ENCODE measurements at regions of chr2 and their contacts with region 1.

Region 1: GRCh38 chr2:18265614-18266587 is 294.6 kb downstream of the RDH14 start:
- DNase-seq: no peak
- H3K4me3 ChIP-seq: no peak overlapping the region
- H3K27ac ChIP-seq: no peak overlapping the region
- H3K4me1 ChIP-seq: no peaks in the 10 kb centered on the region
- H3K27me3 ChIP-seq: no peaks in the 10 kb centered on the region
- CTCF ChIP-seq: peak; percentile 32 to 49 (median 48); a peak in 3 of 4 replicates
- EP300 ChIP-seq: no peak
- POLR2A ChIP-seq: no peak
- RAD21 ChIP-seq: peak in 1 of 2 experiments; percentile 37; a peak in 2 of 4 replicates

Region 2: DNA sequence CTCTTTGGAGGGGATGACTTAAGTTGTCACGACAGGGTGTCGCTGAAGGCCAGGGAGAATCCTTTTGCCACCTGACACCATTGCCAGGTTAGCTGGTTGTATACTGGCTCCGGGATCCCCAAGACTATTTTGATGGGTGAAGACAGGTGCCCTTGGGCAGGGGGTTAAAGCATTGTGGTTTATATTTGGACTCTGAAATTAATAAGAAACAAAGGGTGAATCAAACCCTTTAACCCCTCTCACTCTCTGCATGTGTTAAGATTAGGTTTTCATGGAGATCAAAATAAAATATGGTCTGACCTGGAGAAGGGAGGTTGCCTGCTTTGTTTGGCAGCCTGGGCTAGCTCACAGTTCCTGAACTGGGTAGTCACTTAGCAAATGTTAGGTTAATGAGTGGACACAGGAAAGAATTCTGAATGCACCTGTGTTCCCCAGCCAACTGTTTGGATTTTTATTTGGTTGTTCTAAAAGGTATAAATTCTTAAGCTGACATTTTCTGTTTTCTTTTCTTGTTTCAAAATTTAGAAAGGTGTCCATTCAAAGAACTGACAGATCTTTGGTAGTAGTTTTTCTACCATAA is 85.8 kb before region 1 on chr2:
- CTCF ChIA-PET with region 1: interaction called, 15 read pairs
- POLR2A ChIA-PET with region 1: no interaction called
- DNase-seq: no peak
- H3K4me3 ChIP-seq: no peak overlapping the region
- H3K27ac ChIP-seq: no peak overlapping the region
- H3K4me1 ChIP-seq: no peaks in the 10 kb centered on the region
- H3K27me3 ChIP-seq: no peaks in the 10 kb centered on the region
- CTCF ChIP-seq: no peak
- EP300 ChIP-seq: no peak
- POLR2A ChIP-seq: no peak
- RAD21 ChIP-seq: no peak

Region 3: DNA sequence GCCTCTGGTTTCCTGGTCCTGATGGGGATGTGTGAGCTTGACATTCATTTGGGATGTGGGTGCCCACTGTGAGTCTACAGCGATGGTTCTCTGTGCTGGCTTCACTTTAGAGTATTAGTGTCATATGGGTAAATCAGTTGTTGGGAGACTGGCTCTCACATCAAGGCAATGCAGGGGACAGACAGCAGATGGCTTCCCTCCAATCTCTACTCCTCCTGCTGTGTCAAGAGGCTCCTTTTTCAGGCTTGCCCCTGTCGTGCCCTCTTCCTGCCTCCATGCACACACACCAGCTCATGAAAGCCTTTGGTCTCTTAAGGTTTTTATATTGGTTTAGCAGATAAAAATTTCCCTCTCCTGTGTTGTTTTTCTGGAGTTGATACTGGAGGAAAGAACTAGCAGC is 21.1 kb before region 1 on chr2:
- CTCF ChIA-PET with region 1: interaction called, 18 read pairs
- POLR2A ChIA-PET with region 1: no interaction called
- DNase-seq: no peak
- H3K4me3 ChIP-seq: no peak overlapping the region
- H3K27ac ChIP-seq: no peak overlapping the region
- H3K4me1 ChIP-seq: no peaks in the 10 kb centered on the region
- H3K27me3 ChIP-seq: no peaks in the 10 kb centered on the region
- CTCF ChIP-seq: peak in 1 of 3 experiments; percentile 22; a peak in 1 of 4 replicates
- EP300 ChIP-seq: no peak
- POLR2A ChIP-seq: no peak
- RAD21 ChIP-seq: 0 out of 4 replicates have a peak, but pooled peaks of 1 of the 2 experiments have one; percentile 10

Region 4: DNA sequence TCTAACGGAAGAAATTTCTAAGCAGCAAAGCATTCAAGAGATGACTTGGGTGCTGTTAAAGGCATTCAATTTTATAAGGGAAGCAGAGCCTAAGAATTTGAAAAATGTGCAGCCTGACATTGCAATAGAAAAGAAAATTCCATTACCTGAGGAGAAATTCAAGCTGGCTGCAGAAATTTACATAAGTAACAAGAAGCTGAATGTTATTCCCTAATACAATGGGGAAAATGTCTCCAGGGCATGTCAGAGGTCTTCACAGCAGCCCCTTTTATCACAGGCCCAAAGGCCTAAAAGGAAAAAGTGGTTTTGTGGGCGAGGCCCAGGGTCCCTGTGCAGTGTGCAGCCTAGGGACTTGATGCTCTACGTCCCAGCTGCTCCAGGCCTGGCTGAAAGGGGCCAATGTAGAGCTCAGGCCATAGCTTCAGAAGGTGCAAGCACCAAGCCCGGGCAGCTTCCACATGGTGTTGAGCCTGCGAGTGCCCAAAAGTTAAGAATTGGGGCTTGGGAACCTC is 12.2 kb before region 1 on chr2:
- CTCF ChIA-PET with region 1: interaction called, 19 read pairs
- POLR2A ChIA-PET with region 1: no interaction called
- DNase-seq: no peak
- H3K4me3 ChIP-seq: no peak overlapping the region
- H3K27ac ChIP-seq: no peak overlapping the region
- H3K4me1 ChIP-seq: peaks cover 0 to 3% (median 1%) of the 10 kb centered on the region in 4 experiments; a peak in 1 of 7 replicates
- H3K27me3 ChIP-seq: no peaks in the 10 kb centered on the region
- CTCF ChIP-seq: no peak
- EP300 ChIP-seq: no peak
- POLR2A ChIP-seq: no peak
- RAD21 ChIP-seq: no peak

Region 5: DNA sequence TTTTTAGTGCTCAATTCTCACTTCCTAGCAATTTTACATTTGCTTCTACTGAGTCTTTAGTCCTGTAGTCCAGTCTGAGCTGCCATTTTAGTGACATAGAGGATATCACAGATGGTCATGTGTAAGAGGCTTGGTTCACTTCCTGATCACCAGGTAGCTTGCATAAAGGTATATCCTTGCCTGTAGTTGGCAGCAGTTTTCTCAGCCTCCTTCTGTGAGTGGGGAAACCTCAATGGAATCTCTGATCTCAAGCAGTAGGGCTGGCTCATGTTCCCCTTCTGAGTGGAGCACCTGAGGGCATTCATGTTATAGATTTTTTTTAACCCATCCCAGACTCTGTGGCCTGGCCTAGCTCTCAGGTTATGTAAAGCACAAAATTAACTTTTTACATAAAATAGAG is 16.1 kb after region 1 on chr2:
- CTCF ChIA-PET with region 1: interaction called, 45 read pairs
- POLR2A ChIA-PET with region 1: no interaction called
- DNase-seq: no peak
- H3K4me3 ChIP-seq: no peak overlapping the region
- H3K27ac ChIP-seq: no peak overlapping the region
- H3K4me1 ChIP-seq: no peaks in the 10 kb centered on the region
- H3K27me3 ChIP-seq: no peaks in the 10 kb centered on the region
- CTCF ChIP-seq: no peak
- EP300 ChIP-seq: no peak
- POLR2A ChIP-seq: no peak
- RAD21 ChIP-seq: no peak

Region 6: GRCh38 chr2:18299423-18300212 is 33.7 kb after region 1 on chr2:
- CTCF ChIA-PET with region 1: interaction called, 12 read pairs
- POLR2A ChIA-PET with region 1: no interaction called
- DNase-seq: peak in 1 of 2 experiments; percentile 19
- H3K4me3 ChIP-seq: no peak overlapping the region
- H3K27ac ChIP-seq: no peak overlapping the region
- H3K4me1 ChIP-seq: no peaks in the 10 kb centered on the region
- H3K27me3 ChIP-seq: no peaks in the 10 kb centered on the region
- CTCF ChIP-seq: no peak
- EP300 ChIP-seq: no peak
- POLR2A ChIP-seq: no peak
- RAD21 ChIP-seq: no peak